ENCODE measurements at regions of chr6 and their contacts with region 1.

Region 1: GRCh38 chr6:56359201-56359899 is 112.0 kb upstream of the COL21A1 start:
- DNase-seq: peak; percentile 38 to 55 (median 46)
- H3K4me3 ChIP-seq: no peak overlapping the region
- H3K4me3 Mint-ChIP-seq: no peak overlapping the region
- H3K27ac ChIP-seq: no peak overlapping the region
- H3K27ac Mint-ChIP-seq: no peak overlapping the region
- H3K4me1 ChIP-seq: no peaks in the 10 kb centered on the region
- H3K4me1 Mint-ChIP-seq: no peaks in the 10 kb centered on the region
- H3K27me3 ChIP-seq: no peaks in the 10 kb centered on the region
- H3K27me3 Mint-ChIP-seq: no peaks in the 10 kb centered on the region

Region 2: DNA sequence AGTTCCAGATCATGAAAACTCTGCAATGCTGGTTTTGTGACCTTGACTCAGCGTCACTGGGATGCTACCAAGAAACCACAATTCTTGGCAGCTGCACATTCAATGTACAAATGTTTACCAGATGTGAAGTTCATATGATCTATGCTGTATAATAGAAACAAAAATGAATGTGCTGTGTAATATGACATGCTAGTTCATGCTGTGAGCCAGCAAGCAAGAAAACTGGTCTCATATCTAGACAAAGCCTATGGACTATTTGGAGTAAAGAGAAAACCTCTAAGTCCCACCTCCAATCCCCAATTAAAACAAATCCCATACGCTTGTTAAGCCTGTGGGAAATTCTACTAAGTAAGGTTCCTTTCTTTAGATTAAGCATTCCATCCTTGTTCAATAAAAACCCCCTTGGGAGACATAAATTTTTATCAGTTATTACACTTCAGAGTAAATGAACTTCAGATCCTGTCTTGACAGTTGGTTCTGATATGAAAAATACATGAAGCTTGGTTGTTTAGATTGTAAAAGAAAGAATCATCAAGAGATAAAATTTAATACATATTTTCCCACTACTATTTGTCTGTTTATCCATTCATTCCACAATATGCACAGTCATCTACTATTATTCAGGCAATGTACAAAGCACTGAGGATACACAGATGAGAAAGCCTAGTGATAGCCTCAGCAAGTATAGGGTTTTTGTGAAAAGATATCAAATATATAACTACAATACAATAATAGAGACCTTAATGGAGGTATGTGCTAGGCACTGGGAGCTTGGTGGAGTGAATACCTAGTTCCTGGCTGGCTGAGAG is 132.1 kb before region 1 on chr6:
- CTCF ChIA-PET with region 1: no interaction called
- POLR2A ChIA-PET with region 1: no interaction called
- intact Hi-C with region 1: no loop called
- DNase-seq: no peak
- H3K4me3 ChIP-seq: no peak overlapping the region
- H3K4me3 Mint-ChIP-seq: no peak overlapping the region
- H3K27ac ChIP-seq: no peak overlapping the region
- H3K27ac Mint-ChIP-seq: no peak overlapping the region
- H3K4me1 ChIP-seq: no peaks in the 10 kb centered on the region
- H3K4me1 Mint-ChIP-seq: no peaks in the 10 kb centered on the region
- H3K27me3 ChIP-seq: no peaks in the 10 kb centered on the region
- H3K27me3 Mint-ChIP-seq: no peaks in the 10 kb centered on the region

Region 3: GRCh38 chr6:56570413-56571359 is 211.3 kb after region 1 on chr6:
- CTCF ChIA-PET with region 1: interaction called, 5 read pairs
- POLR2A ChIA-PET with region 1: no interaction called
- intact Hi-C with region 1: loop called (anchors 1 kb)
- DNase-seq: no peak
- H3K4me3 ChIP-seq: no peak overlapping the region
- H3K4me3 Mint-ChIP-seq: no peak overlapping the region
- H3K27ac ChIP-seq: no peak overlapping the region
- H3K27ac Mint-ChIP-seq: no peak overlapping the region
- H3K4me1 ChIP-seq: no peaks in the 10 kb centered on the region
- H3K4me1 Mint-ChIP-seq: peaks cover 0 to 2% (median 0%) of the 10 kb centered on the region in 4 donors
- H3K27me3 ChIP-seq: no peaks in the 10 kb centered on the region
- H3K27me3 Mint-ChIP-seq: no peaks in the 10 kb centered on the region

Region 4: DNA sequence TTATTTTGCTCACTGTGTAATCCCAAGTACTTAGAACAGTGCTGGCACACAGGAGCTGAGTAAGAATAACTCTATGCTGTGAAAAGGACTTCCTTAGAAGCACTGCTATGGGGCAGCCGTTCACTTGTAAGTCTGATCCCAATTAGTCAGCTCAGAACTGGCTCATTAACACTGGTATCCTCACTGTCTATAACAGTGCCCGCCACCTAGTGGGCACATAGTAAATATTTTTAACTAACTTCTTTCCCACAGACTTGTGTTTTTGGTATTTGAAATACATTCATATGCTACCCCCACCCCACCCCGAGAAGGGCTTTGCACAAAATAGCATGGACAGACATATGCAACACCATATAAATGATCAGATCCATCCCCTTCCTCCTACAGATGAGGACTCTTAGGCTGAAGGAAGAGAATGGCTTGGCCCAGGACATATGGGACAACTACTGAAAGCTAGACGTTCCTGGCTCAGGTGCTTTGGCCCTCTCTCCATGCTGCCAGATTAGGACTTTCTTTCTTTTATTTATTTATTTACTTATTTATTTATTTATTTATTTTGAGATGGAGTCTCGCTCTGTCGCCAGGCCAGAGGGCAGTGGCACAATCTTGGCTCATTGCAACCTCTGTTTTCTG is 236.3 kb after region 1 on chr6:
- CTCF ChIA-PET with region 1: interaction called, 12 read pairs
- POLR2A ChIA-PET with region 1: no interaction called
- intact Hi-C with region 1: loop called (anchors 1 kb)
- DNase-seq: peak in 4 of 5 donors; percentile 20 to 28 (median 24)
- H3K4me3 ChIP-seq: no peak overlapping the region
- H3K4me3 Mint-ChIP-seq: peak overlapping the region in 1 of 8 donors; percentile 2
- H3K27ac ChIP-seq: no peak overlapping the region
- H3K27ac Mint-ChIP-seq: peak overlapping the region in 1 of 7 donors; percentile 42
- H3K4me1 ChIP-seq: peaks cover 17% of the 10 kb centered on the region
- H3K4me1 Mint-ChIP-seq: peaks cover 13 to 25% (median 20%) of the 10 kb centered on the region in 4 donors
- H3K27me3 ChIP-seq: no peaks in the 10 kb centered on the region
- H3K27me3 Mint-ChIP-seq: no peaks in the 10 kb centered on the region

Region 5: GRCh38 chr6:56699066-56699654 is 339.8 kb after region 1 on chr6:
- CTCF ChIA-PET with region 1: no interaction called
- POLR2A ChIA-PET with region 1: no interaction called
- intact Hi-C with region 1: loop called (anchors 1 kb)
- DNase-seq: no peak
- H3K4me3 ChIP-seq: no peak overlapping the region
- H3K4me3 Mint-ChIP-seq: no peak overlapping the region
- H3K27ac ChIP-seq: no peak overlapping the region
- H3K27ac Mint-ChIP-seq: no peak overlapping the region
- H3K4me1 ChIP-seq: no peaks in the 10 kb centered on the region
- H3K4me1 Mint-ChIP-seq: no peaks in the 10 kb centered on the region
- H3K27me3 ChIP-seq: no peaks in the 10 kb centered on the region
- H3K27me3 Mint-ChIP-seq: peaks cover 0 to 1% of the 10 kb centered on the region in 2 donors

Region 6: GRCh38 chr6:56851541-56852259 is 492.4 kb after region 1 on chr6:
- CTCF ChIA-PET with region 1: interaction called, 3 read pairs
- POLR2A ChIA-PET with region 1: no interaction called
- intact Hi-C with region 1: loop called (anchors 5 kb)
- DNase-seq: peak in 3 of 5 donors; percentile 11 to 32 (median 14)
- H3K4me3 ChIP-seq: no peak overlapping the region
- H3K4me3 Mint-ChIP-seq: peak overlapping the region; percentile 73 to 86 (median 75)
- H3K27ac ChIP-seq: no peak overlapping the region
- H3K27ac Mint-ChIP-seq: peak overlapping the region in 3 of 7 donors; percentile 2 to 64 (median 25)
- H3K4me1 ChIP-seq: peaks cover 9% of the 10 kb centered on the region
- H3K4me1 Mint-ChIP-seq: peaks cover 13 to 24% (median 17%) of the 10 kb centered on the region in 4 donors
- H3K27me3 ChIP-seq: peaks cover 3% of the 10 kb centered on the region
- H3K27me3 Mint-ChIP-seq: peaks cover 26 to 42% of the 10 kb centered on the region in 2 donors